GM18951 (cell line): ENCODE measurements at regions of chr16 and their contacts with region 1.

Region 1: DNA sequence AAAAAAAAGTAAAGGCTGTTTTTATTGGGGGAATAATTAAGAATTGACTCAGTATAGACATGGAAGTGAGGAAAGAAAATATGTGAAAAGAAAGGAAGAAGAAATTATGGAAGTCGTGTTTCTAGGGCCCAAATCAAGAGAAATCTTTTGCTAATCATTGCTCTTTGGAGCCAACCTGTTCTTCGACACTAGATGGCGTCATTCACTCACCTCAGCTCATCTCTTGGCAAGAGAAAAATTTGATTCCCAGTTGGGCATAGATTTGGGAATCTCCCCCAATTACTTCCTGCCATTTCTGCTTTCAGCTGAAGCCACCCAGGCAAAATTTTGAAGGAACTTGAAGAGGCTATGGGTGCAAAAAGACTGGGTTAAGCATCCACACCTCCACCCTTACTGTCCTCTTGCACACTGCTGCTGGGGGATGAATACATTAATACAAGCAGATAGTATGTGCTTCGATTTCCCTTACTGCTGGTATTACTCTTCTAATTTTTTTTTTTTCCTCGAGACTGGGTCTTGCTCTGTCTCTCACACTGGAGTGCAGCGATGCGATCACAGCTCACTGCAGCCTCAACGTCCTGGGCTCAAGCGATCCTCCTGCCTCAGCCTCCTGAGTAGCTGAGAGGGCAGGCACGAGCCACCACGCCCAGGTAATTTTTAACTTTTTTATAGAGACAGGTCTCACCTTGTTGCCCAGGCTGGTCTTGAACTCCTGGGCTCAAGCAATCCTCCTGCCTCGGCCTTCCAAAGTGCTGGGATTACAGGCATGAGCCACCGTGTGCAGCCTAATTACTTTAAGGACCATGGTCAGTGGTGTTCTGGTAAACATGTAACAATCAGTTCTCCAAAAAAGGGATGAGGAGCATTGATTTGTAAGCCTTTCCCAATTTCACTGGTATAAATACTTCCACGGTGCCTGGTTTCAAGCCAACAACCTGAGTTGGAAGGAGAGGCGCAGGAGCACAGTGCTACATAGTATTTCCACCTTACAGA is 13.5 kb downstream of the PSMD7 start:
- POLR2A ChIP-seq: no peak

Region 2: DNA sequence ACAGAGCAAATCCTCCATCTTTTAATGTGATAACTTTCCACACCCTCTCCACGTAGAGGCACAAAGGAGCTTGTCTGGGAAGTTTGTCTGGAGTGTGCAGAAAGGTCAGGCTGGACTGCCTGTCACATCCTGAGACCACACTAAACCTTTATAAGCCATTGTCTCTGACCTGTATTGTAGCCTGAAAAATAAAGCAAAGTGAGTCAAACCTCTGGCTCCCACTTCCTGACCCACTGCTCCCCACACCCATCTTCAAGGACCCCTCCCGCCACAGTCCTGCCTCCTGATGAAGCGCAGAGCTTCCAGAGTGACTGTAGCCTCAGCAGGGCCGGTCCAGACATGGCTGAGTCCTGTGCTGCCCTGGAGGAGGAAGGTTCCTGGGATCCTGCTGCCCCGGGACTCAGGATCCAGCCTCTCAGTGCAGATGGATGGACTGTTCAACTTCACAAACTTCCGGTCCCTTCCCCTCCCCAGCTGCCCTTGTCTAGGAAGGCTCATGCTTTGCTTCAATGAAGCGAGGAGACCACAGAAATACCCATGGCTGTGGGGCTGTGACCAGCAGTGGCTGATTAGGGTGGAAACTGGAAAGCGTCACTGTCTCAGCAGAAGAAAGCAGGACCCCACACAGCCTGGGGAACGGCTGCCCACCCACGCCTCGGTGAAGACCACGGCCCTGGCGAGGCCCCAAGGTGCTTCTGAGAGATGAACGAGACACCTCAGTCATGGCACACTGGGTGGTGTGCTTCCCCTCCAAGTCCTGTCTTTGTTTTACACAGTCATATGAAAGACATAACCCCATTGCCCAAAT is 142.1 kb after region 1 on chr16:
- in situ Hi-C with region 1: loop called (anchors 25 kb)
- POLR2A ChIP-seq: no peak

Region 3: DNA sequence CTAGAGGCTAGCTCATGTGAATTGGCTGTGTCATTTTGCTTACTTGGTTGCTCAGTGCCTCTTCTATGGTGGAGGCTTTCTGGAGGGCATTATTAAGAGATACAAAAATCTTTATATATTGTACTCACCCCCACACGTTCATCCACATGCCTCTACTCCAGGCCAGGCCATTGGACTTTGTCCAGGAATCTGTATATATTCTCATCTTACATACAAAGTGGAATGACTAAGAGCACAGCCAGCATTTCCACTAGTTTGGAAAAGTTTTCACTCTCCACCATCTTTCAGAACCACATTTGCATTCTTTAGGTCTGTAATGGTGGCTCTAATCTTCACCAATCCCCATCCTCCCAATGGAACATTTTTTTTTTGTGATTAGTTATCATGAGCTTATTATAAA is 301.6 kb after region 1 on chr16:
- in situ Hi-C with region 1: loop called (anchors 10 kb)
- POLR2A ChIP-seq: no peak